ENCODE measurements at regions of chr9 and their contacts with region 1.

Region 1: GRCh38 chr9:127796225-127796813 is 6.4 kb upstream of the FPGS start:
- DNase-seq: no peak
- H3K4me3 ChIP-seq: peak overlapping the region in 1 of 8 donors; percentile 4
- H3K27ac ChIP-seq: peak overlapping the region in 7 of 8 donors; percentile 51 to 75 (median 60)
- H3K4me1 ChIP-seq: peaks cover 19 to 77% (median 54%) of the 10 kb centered on the region in 6 donors
- H3K27me3 ChIP-seq: no peaks in the 10 kb centered on the region
- CTCF ChIP-seq: no peak
- POLR2A ChIP-seq: no peak

Region 2: GRCh38 chr9:127723450-127723849 is 72.9 kb before region 1 on chr9:
- intact Hi-C with region 1: no loop called
- DNase-seq: no peak
- H3K4me3 ChIP-seq: no peak overlapping the region
- H3K27ac ChIP-seq: no peak overlapping the region
- H3K4me1 ChIP-seq: peaks cover 0 to 28% (median 6%) of the 10 kb centered on the region in 6 donors
- H3K27me3 ChIP-seq: peaks cover 0 to 2% (median 0%) of the 10 kb centered on the region in 7 donors
- CTCF ChIP-seq: no peak
- POLR2A ChIP-seq: no peak

Region 3: GRCh38 chr9:127869310-127870152 is 73.2 kb after region 1 on chr9:
- intact Hi-C with region 1: loop called (anchors 10 kb)
- DNase-seq: peak; percentile 97
- H3K4me3 ChIP-seq: no peak overlapping the region
- H3K27ac ChIP-seq: peak overlapping the region in 5 of 8 donors; percentile 79 to 86 (median 82)
- H3K4me1 ChIP-seq: peaks cover 32 to 99% (median 65%) of the 10 kb centered on the region in 6 donors
- H3K27me3 ChIP-seq: no peaks in the 10 kb centered on the region
- CTCF ChIP-seq: peak; percentile 93 to 99 (median 96)
- POLR2A ChIP-seq: no peak